BJ (cell line): ENCODE measurements at regions of chr7 and their contacts with region 1.

Region 1: DNA sequence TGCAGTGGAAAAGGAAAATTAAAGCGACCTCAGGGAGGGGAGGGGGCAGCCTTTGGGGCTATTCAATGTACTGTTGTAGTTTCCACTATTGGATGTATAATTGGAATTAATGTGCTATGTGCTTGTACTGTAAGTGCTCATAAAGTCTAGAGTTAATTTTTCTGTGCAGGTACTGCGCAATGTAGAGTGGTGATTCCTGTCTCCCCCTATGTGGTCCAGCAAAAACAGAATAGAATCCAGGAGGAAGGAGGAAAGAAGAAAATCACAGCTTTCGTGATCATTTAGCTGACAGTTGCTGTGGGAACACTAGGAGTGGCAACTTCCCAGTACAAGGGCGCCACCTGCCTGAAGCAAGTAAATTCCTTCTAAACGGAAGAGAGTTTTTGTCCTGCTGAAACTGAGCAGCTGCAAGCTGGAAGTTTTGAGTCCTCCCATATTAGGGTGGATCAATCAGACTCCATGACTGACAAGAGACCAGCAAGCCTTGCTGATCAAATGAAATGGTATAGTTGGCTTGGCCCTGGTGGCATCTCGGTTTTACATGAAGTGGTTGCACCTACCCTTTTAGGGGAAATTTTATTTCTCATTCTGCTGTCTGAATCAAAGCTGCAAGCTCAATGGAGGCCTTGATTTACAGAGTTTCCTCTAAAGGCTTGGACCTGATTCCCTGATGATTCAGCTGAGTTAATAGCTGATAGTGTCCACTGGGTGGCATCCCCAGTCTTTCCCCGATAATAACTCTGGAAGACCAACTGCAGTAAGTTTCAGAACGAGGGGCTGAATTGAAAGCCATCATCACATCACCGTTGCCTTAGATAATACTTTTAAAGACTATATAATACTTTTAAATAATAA is 299.8 kb downstream of the HGF start:
- DNase-seq: no peak
- H3K4me3 ChIP-seq: no peak overlapping the region
- H3K27me3 ChIP-seq: no peaks in the 10 kb centered on the region
- CTCF ChIP-seq: peak; percentile 78

Region 2: GRCh38 chr7:80699045-80699638 is 771.0 kb before region 1 on chr7:
- CTCF ChIA-PET with region 1: interaction called, 26 read pairs
- POLR2A ChIA-PET with region 1: no interaction called
- DNase-seq: no peak
- H3K4me3 ChIP-seq: no peak overlapping the region
- H3K27me3 ChIP-seq: no peaks in the 10 kb centered on the region
- CTCF ChIP-seq: peak; percentile 46

Region 3: GRCh38 chr7:80918909-80919662 is 551.0 kb before region 1 on chr7 and contains the start of gene SEMA3C:
- CTCF ChIA-PET with region 1: interaction called, 17 read pairs
- POLR2A ChIA-PET with region 1: no interaction called
- DNase-seq: peak; percentile 75
- H3K4me3 ChIP-seq: peak within 1 kb of the TSS; percentile 52
- H3K27me3 ChIP-seq: no peaks in the 10 kb centered on the region
- CTCF ChIP-seq: peak; percentile 25
- polyA plus RNA-seq, gene SEMA3C: 64.1 and 118 TPM in 2 replicates

Region 4: GRCh38 chr7:81457852-81458522 is 12.1 kb before region 1 on chr7:
- CTCF ChIA-PET with region 1: interaction called, 18 read pairs
- POLR2A ChIA-PET with region 1: no interaction called
- DNase-seq: no peak
- H3K4me3 ChIP-seq: no peak overlapping the region
- H3K27me3 ChIP-seq: no peaks in the 10 kb centered on the region
- CTCF ChIP-seq: peak; percentile 43

Region 5: DNA sequence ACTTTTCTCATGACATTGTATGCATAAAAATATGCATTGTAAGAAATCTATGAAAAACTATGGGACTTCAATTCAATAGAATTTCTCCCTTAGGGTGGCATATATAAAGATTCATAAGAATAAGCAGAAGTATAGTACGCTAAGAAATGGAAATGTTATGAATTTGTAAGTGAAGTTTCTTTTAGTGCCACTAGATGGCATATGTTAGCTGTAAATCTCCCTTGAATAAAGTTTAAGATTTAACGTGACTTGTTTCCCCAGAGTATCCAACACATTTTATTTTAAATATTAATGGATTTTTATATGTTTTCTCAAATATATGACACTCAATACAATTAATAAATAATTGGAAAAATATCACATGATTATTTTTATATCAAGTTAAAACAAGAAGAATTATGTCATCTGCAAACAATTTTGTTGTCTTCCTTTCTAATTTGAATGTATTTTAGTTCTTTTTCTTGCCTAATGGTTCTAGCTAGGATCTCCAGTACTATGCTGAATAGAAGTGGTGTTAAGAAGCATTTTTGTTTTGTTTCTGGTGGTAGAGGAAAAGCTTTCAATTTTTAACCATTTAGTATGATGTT is 12.6 kb after region 1 on chr7:
- CTCF ChIA-PET with region 1: interaction called, 14 read pairs
- POLR2A ChIA-PET with region 1: no interaction called
- DNase-seq: no peak
- H3K4me3 ChIP-seq: no peak overlapping the region
- H3K27me3 ChIP-seq: no peaks in the 10 kb centered on the region
- CTCF ChIP-seq: peak; percentile 47